GM12878 (cell line): ENCODE measurements at regions of chr21 and their contacts with region 1.

Region 1: GRCh38 chr21:37358397-37358796 is 8.2 kb upstream of the DYRK1A start:
- DNase-seq: no peak
- ATAC-seq: no peak
- H3K4me3 ChIP-seq: no peak overlapping the region
- H3K27ac ChIP-seq: no peak overlapping the region
- H3K4me1 ChIP-seq: no peaks in the 10 kb centered on the region
- H3K27me3 ChIP-seq: no peaks in the 10 kb centered on the region
- CTCF ChIP-seq: no peak
- EP300 ChIP-seq: no peak
- POLR2A ChIP-seq: no peak
- RAD21 ChIP-seq: no peak

Region 2: DNA sequence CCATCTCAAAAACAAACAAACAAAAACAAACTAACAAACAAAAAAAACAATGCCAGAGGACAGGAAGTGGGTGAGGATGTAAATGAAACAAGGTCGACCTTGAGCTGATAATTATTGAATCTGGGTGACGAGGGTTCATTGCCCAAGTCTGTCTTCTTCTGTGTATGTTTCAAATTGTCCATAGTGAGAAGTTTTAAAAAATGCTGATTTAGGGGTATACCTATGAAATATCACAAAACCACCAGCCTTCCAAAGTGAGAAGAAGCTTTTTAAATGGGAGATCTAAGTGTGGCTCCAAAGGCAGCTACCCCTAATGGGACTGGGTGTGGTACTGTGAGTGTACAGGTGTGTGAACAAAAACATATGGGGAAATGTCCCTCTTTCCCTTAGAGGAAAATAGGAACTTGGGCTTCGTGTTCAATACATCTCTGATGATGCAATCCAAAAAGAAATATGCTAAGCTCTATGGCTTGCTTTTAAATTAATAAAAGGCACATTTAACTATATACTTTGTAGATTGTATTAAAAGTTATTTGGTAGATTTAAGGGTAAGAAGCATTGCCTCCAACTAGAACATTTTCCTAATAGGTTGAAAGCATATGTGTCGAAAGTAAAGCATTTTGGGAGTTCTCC is 58.2 kb before region 1 on chr21:
- CTCF ChIA-PET with region 1: no interaction called
- POLR2A ChIA-PET with region 1: no interaction called
- RAD21 ChIA-PET with region 1: no interaction called
- SMC1A ChIA-PET with region 1: no interaction called
- in situ Hi-C with region 1: no loop called
- intact Hi-C with region 1: loop called (anchors 10 kb)
- DNase-seq: no peak
- ATAC-seq: no peak
- H3K4me3 ChIP-seq: no peak overlapping the region
- H3K27ac ChIP-seq: no peak overlapping the region
- H3K4me1 ChIP-seq: no peaks in the 10 kb centered on the region
- H3K27me3 ChIP-seq: no peaks in the 10 kb centered on the region
- CTCF ChIP-seq: no peak
- EP300 ChIP-seq: no peak
- POLR2A ChIP-seq: no peak
- RAD21 ChIP-seq: no peak